CD8-positive, alpha-beta T cell (primary cell): ENCODE measurements at regions of chr4 and their contacts with region 1.

Region 1: DNA sequence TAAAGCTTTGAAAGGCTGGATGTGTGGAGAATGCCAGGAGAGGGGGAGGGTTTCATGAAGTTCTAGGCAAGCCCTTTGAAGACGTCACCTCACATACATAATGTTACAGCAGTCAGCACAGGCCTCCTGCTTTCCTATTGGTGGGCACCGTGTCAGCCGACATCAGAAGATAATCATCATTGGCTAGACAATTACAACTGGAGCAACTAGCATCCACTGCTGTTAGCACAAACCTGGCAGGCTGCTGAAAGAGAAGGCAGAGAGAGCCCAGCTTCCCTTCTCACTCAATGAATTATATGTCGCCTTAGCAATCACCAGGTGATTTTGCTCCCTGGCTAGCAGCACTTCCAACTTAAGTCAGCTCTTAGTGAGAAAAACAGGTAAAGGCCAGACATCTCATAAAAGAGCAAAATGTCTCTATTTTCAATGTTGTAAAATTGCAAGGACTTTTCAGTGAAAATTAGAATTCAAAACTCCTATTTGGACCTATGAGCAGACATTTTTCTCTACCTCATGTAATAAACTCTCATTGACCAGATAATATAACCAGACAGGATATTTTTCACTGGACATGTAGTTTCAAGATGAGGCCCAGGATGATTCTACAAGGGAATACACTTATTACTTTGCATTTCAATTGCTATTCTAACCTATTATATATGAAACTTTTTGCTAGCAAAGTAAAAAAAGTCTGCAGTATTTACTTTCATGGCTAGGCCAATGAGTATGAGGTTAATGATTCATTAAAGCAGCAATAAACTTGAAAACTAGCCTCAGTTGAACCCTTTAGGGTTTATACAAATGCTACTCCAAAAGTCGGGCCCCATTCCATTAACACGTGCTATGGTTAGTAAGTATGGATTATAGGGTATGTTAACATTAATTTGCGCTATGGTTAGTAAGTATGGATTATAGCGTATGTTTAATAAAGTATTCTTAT is 4.3 kb downstream of the ELOVL6 start:
- DNase-seq: peak; percentile 47 to 90 (median 71)
- ATAC-seq: peak; percentile 86
- H3K4me3 ChIP-seq: no peak overlapping the region
- H3K4me3 Mint-ChIP-seq: no peak overlapping the region
- H3K27ac ChIP-seq: peak overlapping the region; percentile 1 to 63
- H3K27ac Mint-ChIP-seq: peak overlapping the region; percentile 90
- H3K4me1 ChIP-seq: peaks cover 15% of the 10 kb centered on the region
- H3K4me1 Mint-ChIP-seq: peaks cover 36% of the 10 kb centered on the region
- H3K27me3 ChIP-seq: no peaks in the 10 kb centered on the region
- H3K27me3 Mint-ChIP-seq: no peaks in the 10 kb centered on the region
- CTCF ChIP-seq: no peak

Region 2: GRCh38 chr4:108650212-108651013 is 1543.7 kb before region 1 on chr4 and contains the start of gene OSTC:
- CTCF ChIA-PET with region 1: no interaction called
- POLR2A ChIA-PET with region 1: no interaction called
- intact Hi-C with region 1: loop called (anchors 5 to 10 kb)
- DNase-seq: peak; percentile 81 to 96 (median 93)
- ATAC-seq: peak; percentile 89
- H3K4me3 ChIP-seq: peak within 1 kb of the TSS; percentile 83 to 98
- H3K4me3 Mint-ChIP-seq: peak within 1 kb of the TSS; percentile 93
- H3K27ac ChIP-seq: peak within 1 kb of the TSS; percentile 93 to 94
- H3K27ac Mint-ChIP-seq: peak within 1 kb of the TSS; percentile 98
- H3K4me1 ChIP-seq: peaks cover 23% of the 10 kb centered on the region
- H3K4me1 Mint-ChIP-seq: peaks cover 40% of the 10 kb centered on the region
- H3K27me3 ChIP-seq: no peaks in the 10 kb centered on the region
- H3K27me3 Mint-ChIP-seq: no peaks in the 10 kb centered on the region
- CTCF ChIP-seq: no peak
- total RNA-seq, gene OSTC: 25.6 to 28.1 TPM

Region 3: DNA sequence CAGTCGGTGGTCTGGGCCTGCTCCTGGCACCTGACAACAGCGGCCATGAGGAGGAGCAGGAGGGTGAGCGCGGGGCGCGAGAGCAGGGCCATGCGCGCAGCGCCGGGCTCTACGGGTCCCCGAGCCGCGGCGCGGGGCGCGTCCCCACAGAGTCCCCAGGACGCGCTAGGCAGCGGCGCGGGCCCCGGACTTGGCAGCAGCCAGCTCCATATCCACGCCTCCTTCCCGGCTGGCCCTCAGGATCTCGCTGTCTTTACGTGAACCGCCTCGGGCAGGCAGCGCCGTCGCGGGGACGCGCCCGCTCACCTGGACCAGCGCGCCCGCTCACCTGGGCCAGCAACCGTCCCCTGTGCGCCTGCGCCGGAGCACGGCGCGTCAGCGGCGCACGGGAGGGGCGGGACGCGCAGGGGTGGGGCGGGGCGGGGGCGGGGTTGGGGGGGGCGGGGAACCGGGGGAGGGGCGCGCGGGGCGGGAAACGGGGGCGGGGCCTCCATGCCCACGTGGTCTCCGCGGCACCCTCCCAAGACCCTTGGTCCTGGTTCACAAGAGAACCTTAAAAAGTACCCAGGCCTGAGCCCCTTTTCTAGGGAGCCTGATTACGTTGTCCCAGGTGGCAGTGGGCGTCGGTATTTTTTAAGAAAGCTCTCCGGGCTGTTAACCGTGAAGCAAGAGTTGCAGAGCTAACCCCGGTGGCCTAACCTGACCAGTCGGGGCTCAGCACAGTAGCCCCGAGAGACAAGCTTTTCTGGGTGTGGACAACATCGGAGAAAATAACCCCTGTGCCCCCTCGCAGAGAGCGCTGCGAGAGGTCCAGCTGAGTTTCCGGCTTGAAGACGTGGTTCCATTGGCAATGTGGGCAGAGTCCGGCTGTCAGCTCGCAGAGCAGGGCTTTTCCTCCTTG is 464.1 kb before region 1 on chr4 and contains the start of gene PLA2G12A:
- CTCF ChIA-PET with region 1: no interaction called
- POLR2A ChIA-PET with region 1: no interaction called
- intact Hi-C with region 1: loop called in 1 of 2 experiments (anchors 5 kb)
- DNase-seq: peak; percentile 65 to 91 (median 81)
- ATAC-seq: peak; percentile 93
- H3K4me3 ChIP-seq: peak within 1 kb of the TSS; percentile 89 to 92
- H3K4me3 Mint-ChIP-seq: peak within 1 kb of the TSS; percentile 90
- H3K27ac ChIP-seq: peak within 1 kb of the TSS; percentile 69 to 78
- H3K27ac Mint-ChIP-seq: peak within 1 kb of the TSS; percentile 90
- H3K4me1 ChIP-seq: peaks cover 17% of the 10 kb centered on the region
- H3K4me1 Mint-ChIP-seq: peaks cover 27% of the 10 kb centered on the region
- H3K27me3 ChIP-seq: no peaks in the 10 kb centered on the region
- H3K27me3 Mint-ChIP-seq: no peaks in the 10 kb centered on the region
- CTCF ChIP-seq: no peak
- total RNA-seq, gene PLA2G12A: 7.8 to 10.2 TPM

Region 4: DNA sequence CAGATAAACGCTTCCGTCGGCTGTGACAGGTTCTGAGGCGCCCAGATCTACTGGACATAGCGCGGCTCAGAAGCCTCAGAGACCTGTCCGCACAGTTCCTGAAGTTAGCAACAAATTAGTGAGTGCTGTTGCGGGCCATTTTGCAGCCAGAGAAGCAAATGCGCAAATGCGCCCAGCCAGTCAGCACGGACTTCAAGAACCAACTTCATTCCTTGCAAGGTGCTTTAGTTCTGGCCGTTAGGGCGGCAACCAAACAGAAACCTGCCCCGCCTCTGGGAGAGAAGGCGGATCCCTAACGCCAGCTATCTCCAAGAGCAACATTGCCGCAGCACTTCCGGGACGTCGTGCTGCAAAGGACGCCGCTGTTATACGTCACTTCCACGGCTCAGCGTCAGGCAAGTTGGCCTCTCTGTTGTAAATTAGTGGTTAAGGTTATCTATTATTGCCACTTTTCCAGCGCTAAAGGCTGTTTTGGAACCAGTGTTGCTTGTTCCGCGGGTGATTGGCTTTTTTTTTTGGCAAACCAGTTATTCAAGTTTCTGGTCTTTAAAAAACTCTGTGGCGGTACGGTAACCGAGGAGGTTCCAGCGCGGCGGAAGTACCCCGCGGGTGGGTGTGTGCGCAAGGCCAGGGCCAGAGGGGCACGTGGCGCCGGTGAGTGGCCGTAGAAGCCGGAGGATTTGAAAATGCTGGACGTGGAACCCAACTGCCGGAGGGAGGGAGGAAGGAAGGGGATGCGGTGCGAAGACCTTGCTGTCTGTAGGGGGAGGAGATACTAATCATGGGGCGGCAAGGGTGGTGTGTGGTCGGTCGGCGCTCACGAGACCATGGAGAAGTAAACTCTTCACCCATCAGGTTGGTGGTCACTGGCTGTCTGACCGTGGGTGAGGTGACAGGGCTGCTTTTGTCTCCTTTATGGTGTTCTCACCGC is 378.7 kb before region 1 on chr4 and contains the start of gene GAR1:
- CTCF ChIA-PET with region 1: no interaction called
- POLR2A ChIA-PET with region 1: no interaction called
- intact Hi-C with region 1: loop called (anchors 5 to 10 kb)
- DNase-seq: peak; percentile 67 to 95 (median 86)
- ATAC-seq: peak; percentile 92
- H3K4me3 ChIP-seq: peak within 1 kb of the TSS; percentile 85 to 87
- H3K4me3 Mint-ChIP-seq: peak within 1 kb of the TSS; percentile 99
- H3K27ac ChIP-seq: peak within 1 kb of the TSS; percentile 96 to 97
- H3K27ac Mint-ChIP-seq: peak within 1 kb of the TSS; percentile 99
- H3K4me1 ChIP-seq: peaks cover 16% of the 10 kb centered on the region
- H3K4me1 Mint-ChIP-seq: peaks cover 43% of the 10 kb centered on the region
- H3K27me3 ChIP-seq: no peaks in the 10 kb centered on the region
- H3K27me3 Mint-ChIP-seq: no peaks in the 10 kb centered on the region
- CTCF ChIP-seq: no peak
- total RNA-seq, gene GAR1: 11.8 to 15.4 TPM

Region 5: DNA sequence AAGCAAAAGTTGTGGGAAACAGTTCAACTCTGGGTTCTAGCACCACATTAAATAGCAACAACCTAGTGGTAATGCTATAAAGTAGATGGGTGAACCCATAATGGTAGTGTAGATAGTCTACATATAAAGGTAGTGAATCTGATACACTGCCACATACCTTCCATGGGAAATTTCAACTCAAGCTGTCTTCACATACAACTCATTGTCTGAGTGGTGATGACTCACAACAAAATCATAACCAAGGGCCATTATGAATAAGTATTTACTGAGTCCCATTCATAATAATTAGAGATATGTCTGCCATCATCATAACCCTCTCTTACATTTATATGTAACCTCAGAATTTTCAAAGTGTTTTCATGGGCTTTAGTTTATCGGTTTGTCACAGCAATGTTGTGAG is 246.6 kb before region 1 on chr4:
- CTCF ChIA-PET with region 1: no interaction called
- POLR2A ChIA-PET with region 1: no interaction called
- intact Hi-C with region 1: no loop called
- DNase-seq: no peak
- ATAC-seq: no peak
- H3K4me3 ChIP-seq: no peak overlapping the region
- H3K4me3 Mint-ChIP-seq: no peak overlapping the region
- H3K27ac ChIP-seq: no peak overlapping the region
- H3K27ac Mint-ChIP-seq: no peak overlapping the region
- H3K4me1 ChIP-seq: no peaks in the 10 kb centered on the region
- H3K4me1 Mint-ChIP-seq: no peaks in the 10 kb centered on the region
- H3K27me3 ChIP-seq: no peaks in the 10 kb centered on the region
- H3K27me3 Mint-ChIP-seq: no peaks in the 10 kb centered on the region
- CTCF ChIP-seq: no peak

Region 6: GRCh38 chr4:110049951-110050925 is 143.9 kb before region 1 on chr4:
- CTCF ChIA-PET with region 1: interaction called, 8 read pairs
- POLR2A ChIA-PET with region 1: no interaction called
- intact Hi-C with region 1: loop called in 1 of 2 experiments (anchors 1 kb)
- DNase-seq: peak; percentile 22 to 72 (median 56)
- ATAC-seq: peak; percentile 71
- H3K4me3 ChIP-seq: no peak overlapping the region
- H3K4me3 Mint-ChIP-seq: no peak overlapping the region
- H3K27ac ChIP-seq: no peak overlapping the region
- H3K27ac Mint-ChIP-seq: no peak overlapping the region
- H3K4me1 ChIP-seq: no peaks in the 10 kb centered on the region
- H3K4me1 Mint-ChIP-seq: no peaks in the 10 kb centered on the region
- H3K27me3 ChIP-seq: no peaks in the 10 kb centered on the region
- H3K27me3 Mint-ChIP-seq: no peaks in the 10 kb centered on the region
- CTCF ChIP-seq: peak; percentile 71

Region 7: GRCh38 chr4:110165382-110166285 is 28.5 kb before region 1 on chr4:
- CTCF ChIA-PET with region 1: no interaction called
- POLR2A ChIA-PET with region 1: interaction called, 28 read pairs
- intact Hi-C with region 1: loop called (anchors 1 to 5 kb)
- DNase-seq: peak; percentile 23 to 83 (median 66)
- ATAC-seq: peak; percentile 100
- H3K4me3 ChIP-seq: peak overlapping the region in 1 of 2 experiments; percentile 13
- H3K4me3 Mint-ChIP-seq: peak overlapping the region; percentile 51
- H3K27ac ChIP-seq: peak overlapping the region; percentile 31 to 81
- H3K27ac Mint-ChIP-seq: peak overlapping the region; percentile 97
- H3K4me1 ChIP-seq: peaks cover 28% of the 10 kb centered on the region
- H3K4me1 Mint-ChIP-seq: peaks cover 38% of the 10 kb centered on the region
- H3K27me3 ChIP-seq: no peaks in the 10 kb centered on the region
- H3K27me3 Mint-ChIP-seq: no peaks in the 10 kb centered on the region
- CTCF ChIP-seq: no peak

Region 8: GRCh38 chr4:110516106-110516922 is 322.2 kb after region 1 on chr4:
- CTCF ChIA-PET with region 1: interaction called, 3 read pairs
- POLR2A ChIA-PET with region 1: no interaction called
- intact Hi-C with region 1: loop called in 1 of 2 experiments (anchors 5 kb)
- DNase-seq: peak; percentile 44 to 87 (median 76)
- ATAC-seq: peak; percentile 92
- H3K4me3 ChIP-seq: peak overlapping the region; percentile 66 to 75
- H3K4me3 Mint-ChIP-seq: peak overlapping the region; percentile 92
- H3K27ac ChIP-seq: peak overlapping the region; percentile 13 to 73
- H3K27ac Mint-ChIP-seq: peak overlapping the region; percentile 62
- H3K4me1 ChIP-seq: peaks cover 10% of the 10 kb centered on the region
- H3K4me1 Mint-ChIP-seq: peaks cover 14% of the 10 kb centered on the region
- H3K27me3 ChIP-seq: no peaks in the 10 kb centered on the region
- H3K27me3 Mint-ChIP-seq: peaks cover 14% of the 10 kb centered on the region
- CTCF ChIP-seq: peak; percentile 90